ENCODE measurements at regions of chr5 and their contacts with region 1.

Region 1: DNA sequence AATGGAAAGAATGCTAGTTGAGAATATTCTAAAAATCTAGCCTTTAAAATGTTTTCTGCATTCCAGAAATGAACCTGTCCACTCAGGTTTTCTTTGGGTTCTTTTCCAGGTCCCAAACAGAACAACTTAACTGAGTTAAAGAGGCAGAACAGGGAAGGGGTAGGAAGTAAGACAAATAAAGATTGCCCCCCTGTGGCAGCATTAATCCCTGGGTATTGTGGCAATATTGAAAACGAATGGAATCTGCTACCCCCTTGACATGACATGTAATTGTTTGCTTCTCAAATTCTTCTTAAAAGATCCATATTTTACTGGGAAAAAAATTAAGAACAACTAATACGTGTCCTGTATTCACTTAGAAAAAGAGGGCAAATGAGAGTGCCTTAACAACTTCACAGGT is 9.3 kb upstream of the RBM22 start:
- DNase-seq: peak; percentile 35 to 55 (median 46)
- H3K4me3 ChIP-seq: no peak overlapping the region
- H3K27ac ChIP-seq: no peak overlapping the region
- H3K4me1 ChIP-seq: no peaks in the 10 kb centered on the region
- H3K27me3 ChIP-seq: no peaks in the 10 kb centered on the region

Region 2: GRCh38 chr5:150550286-150550685 is 159.9 kb before region 1 on chr5:
- CTCF ChIA-PET with region 1: no interaction called
- POLR2A ChIA-PET with region 1: no interaction called
- DNase-seq: peak; percentile 31 to 62 (median 57)
- H3K4me3 ChIP-seq: peak overlapping the region in 1 of 7 experiments; percentile 48
- H3K27ac ChIP-seq: peak overlapping the region; percentile 10 to 55
- H3K4me1 ChIP-seq: peaks cover 0 to 35% (median 16%) of the 10 kb centered on the region in 4 experiments
- H3K27me3 ChIP-seq: no peaks in the 10 kb centered on the region

Region 3: GRCh38 chr5:150723845-150724244 is 13.7 kb after region 1 on chr5:
- CTCF ChIA-PET with region 1: interaction called, 10 read pairs
- POLR2A ChIA-PET with region 1: no interaction called
- DNase-seq: no peak
- H3K4me3 ChIP-seq: no peak overlapping the region
- H3K27ac ChIP-seq: no peak overlapping the region
- H3K4me1 ChIP-seq: no peaks in the 10 kb centered on the region
- H3K27me3 ChIP-seq: no peaks in the 10 kb centered on the region